ENCODE measurements at regions of chr3 and their contacts with region 1.

Region 1: GRCh38 chr3:180594631-180595558 is 7.1 kb upstream of the TTC14 start:
- DNase-seq: peak in 1 of 42 donors; percentile 36

Region 2: DNA sequence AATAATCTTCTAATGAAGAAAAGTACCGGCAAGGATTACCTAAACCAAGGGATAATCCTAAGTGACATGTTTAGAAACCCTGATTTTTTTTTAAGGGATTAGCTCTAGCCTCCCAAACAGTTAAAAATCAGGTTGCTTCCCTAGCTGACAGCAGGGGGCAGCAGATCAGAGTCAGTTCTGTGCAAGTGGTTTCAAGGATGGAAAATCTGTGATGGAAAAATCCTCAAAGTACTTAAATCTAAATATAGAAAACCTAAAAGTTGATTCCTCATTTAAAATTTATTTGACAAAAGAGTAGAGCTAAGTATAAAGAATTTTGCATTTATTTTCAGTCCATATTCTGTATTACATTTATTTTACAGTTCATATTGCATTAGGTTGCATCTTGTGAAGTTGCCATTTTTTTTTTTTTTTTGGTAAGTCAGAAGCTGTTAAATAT is 665.8 kb before region 1 on chr3:
- intact Hi-C with region 1: loop called (anchors 10 kb)
- DNase-seq: peak; percentile 28 to 91 (median 78)

Region 3: GRCh38 chr3:180409883-180410282 is 185.0 kb before region 1 on chr3:
- intact Hi-C with region 1: loop called (anchors 5 kb)
- DNase-seq: no peak

Region 4: GRCh38 chr3:180782195-180782984 is 187.5 kb after region 1 on chr3:
- intact Hi-C with region 1: no loop called
- DNase-seq: no peak